A673 (cell line): ENCODE measurements at regions of chr4 and their contacts with region 1.

Region 1: DNA sequence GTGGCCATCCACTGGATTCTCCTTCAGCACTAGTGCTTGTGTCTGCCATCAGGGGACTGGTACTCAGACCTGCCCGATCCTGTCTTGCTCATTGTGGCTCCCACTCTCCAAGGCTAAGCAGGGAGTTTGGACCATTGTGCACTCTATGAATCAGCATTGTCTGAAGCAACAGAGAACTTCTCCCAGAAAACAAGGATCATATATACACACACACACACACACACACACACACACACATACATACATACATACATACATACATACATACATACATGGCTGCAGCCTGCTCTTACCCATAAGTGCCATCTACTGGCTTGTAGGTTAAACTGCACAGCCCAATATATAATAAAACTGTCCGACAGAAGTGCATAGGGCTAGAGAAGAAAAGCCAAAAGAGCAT is 345.3 kb upstream of the LCORL start:
- DNase-seq: peak; percentile 46
- H3K4me3 ChIP-seq: no peak overlapping the region
- H3K27ac ChIP-seq: no peak overlapping the region
- H3K4me1 ChIP-seq: no peaks in the 10 kb centered on the region
- H3K27me3 ChIP-seq: no peaks in the 10 kb centered on the region
- CTCF ChIP-seq: peak; percentile 67

Region 2: GRCh38 chr4:17915439-17915838 is 451.5 kb before region 1 on chr4:
- CTCF ChIA-PET with region 1: no interaction called
- POLR2A ChIA-PET with region 1: no interaction called
- intact Hi-C with region 1: no loop called
- DNase-seq: no peak
- H3K4me3 ChIP-seq: no peak overlapping the region
- H3K27ac ChIP-seq: no peak overlapping the region
- H3K4me1 ChIP-seq: no peaks in the 10 kb centered on the region
- H3K27me3 ChIP-seq: no peaks in the 10 kb centered on the region
- CTCF ChIP-seq: no peak

Region 3: GRCh38 chr4:17941731-17942130 is 425.2 kb before region 1 on chr4:
- CTCF ChIA-PET with region 1: no interaction called
- POLR2A ChIA-PET with region 1: no interaction called
- intact Hi-C with region 1: loop called (anchors 5 kb)
- DNase-seq: no peak
- H3K4me3 ChIP-seq: no peak overlapping the region
- H3K27ac ChIP-seq: no peak overlapping the region
- H3K4me1 ChIP-seq: peaks cover 8% of the 10 kb centered on the region
- H3K27me3 ChIP-seq: no peaks in the 10 kb centered on the region
- CTCF ChIP-seq: no peak

Region 4: GRCh38 chr4:18608908-18609533 is 242.1 kb after region 1 on chr4:
- CTCF ChIA-PET with region 1: no interaction called
- POLR2A ChIA-PET with region 1: no interaction called
- intact Hi-C with region 1: no loop called
- DNase-seq: no peak
- H3K4me3 ChIP-seq: no peak overlapping the region
- H3K27ac ChIP-seq: no peak overlapping the region
- H3K4me1 ChIP-seq: no peaks in the 10 kb centered on the region
- H3K27me3 ChIP-seq: no peaks in the 10 kb centered on the region
- CTCF ChIP-seq: no peak